A549 (cell line): ENCODE measurements at regions of chr3 and their contacts with region 1.

Region 1: DNA sequence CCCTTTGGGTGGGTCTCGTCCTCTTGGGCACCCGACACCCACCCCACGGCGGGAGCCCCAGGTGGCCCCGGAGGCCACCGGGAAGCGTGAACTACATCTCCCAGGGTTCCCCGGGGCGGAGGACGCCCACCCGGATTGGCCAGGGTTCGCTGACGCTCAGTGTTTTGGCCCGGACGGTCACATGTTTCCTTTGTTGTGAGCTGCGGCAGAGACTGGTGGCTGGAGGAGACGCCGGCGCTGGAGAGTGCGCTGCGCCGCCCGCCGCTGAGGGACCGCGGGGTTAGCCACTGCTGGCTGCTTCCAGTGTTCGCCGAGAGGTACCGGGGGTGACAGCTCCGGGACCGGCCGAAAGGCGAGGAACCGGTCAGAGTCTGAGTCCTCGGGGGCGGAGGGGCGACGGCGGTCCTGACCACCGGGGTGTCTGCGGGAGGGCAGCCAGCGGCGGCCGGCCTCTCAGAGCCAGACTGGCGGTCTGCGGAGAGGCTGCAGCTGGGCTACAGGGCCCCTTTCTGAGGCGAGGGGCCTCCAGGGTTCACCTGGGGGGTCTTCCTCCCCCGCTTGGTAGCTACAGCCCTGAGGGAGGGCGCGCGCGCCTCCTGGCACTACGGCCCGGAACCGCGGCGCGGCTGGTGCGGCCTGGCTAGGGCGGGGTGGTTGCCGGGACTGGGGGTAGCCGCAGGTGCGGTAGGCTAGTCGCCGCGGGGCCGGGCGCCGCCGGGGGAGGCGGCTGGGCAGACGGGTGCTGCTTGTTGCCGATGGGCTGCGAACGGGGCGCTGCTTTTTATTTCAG is at the start of gene KLHL24:
- DNase-seq: peak; percentile 78 to 86
- ATAC-seq: peak; percentile 92 to 96
- H3K4me3 ChIP-seq: peak within 1 kb of the TSS; percentile 91
- H3K27ac ChIP-seq: peak within 1 kb of the TSS; percentile 80 to 89
- H3K4me1 ChIP-seq: peaks cover 4% of the 10 kb centered on the region; the same call in 1 of the 3 replicates
- CTCF ChIP-seq: no peak
- EP300 ChIP-seq: no peak
- POLR2A ChIP-seq: no peak
- RAD21 ChIP-seq: no peak
- polyA plus RNA-seq, gene KLHL24: 10.9 and 11.9 TPM in 2 replicates

Region 2: GRCh38 chr3:183697610-183698317 is 62.1 kb after region 1 on chr3 and contains the start of gene YEATS2:
- CTCF ChIA-PET with region 1: no interaction called
- POLR2A ChIA-PET with region 1: interaction called, 17 read pairs
- DNase-seq: peak; percentile 68 to 76
- ATAC-seq: peak; percentile 85 to 91
- H3K4me3 ChIP-seq: peak within 1 kb of the TSS; percentile 85
- H3K27ac ChIP-seq: peak within 1 kb of the TSS; percentile 84 to 96
- H3K4me1 ChIP-seq: peaks cover 15% of the 10 kb centered on the region; the same call in 2 of the 3 replicates
- CTCF ChIP-seq: no peak
- EP300 ChIP-seq: no peak
- POLR2A ChIP-seq: peak; percentile 73
- RAD21 ChIP-seq: no peak
- polyA plus RNA-seq, gene YEATS2: 15.3 and 17.4 TPM in 2 replicates